Prostate gland (tissue), 2 donors: ENCODE measurements at regions of chr20 and their contacts with region 1.

Region 1: DNA sequence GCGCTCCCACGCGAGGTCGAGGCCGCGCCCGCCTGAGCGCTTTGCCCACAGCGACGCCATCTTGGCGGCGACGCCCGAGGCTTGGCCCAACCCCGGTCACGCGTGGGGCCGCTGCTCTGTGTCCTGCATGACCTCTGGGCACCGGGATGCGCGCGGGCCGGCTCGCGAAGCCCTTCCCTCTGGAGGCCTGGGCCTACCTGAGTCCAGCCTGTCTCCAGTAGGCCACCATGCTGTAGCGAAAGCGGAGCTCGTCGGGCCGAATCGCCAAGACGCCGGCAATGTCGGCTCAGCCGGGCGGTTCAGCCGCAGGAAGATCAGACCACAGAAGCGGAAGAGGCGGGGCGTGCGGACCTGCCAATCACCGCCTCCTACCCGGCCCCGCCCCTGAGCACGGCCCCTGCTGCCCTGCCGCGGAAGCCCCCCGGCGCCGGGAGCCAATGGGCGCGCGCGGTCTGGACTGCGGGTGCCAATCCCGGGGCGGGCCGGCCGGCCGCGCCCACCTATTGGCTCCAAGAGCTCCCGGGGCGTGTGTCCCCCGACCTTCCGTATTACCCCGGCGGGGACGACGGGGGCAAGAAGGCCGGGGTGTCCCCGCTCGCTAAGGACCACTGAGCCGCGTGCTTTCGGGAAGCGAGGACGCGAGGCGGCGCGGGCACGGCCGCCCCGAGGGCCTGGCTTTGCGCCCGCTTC is at the start of gene ATP5F1E:
- DNase-seq: peak; percentile 95
- H3K4me3 ChIP-seq: peak within 1 kb of the TSS; percentile 66 to 68
- H3K27ac ChIP-seq: peak within 1 kb of the TSS; percentile 84
- H3K4me1 ChIP-seq: peaks cover 7% of the 10 kb centered on the region
- H3K27me3 ChIP-seq: no peaks in the 10 kb centered on the region
- CTCF ChIP-seq: peak in 2 of 4 experiments; percentile 5 to 7
- POLR2A ChIP-seq: peak; percentile 71
- total RNA-seq, gene ATP5F1E: 23.5 to 24.4 TPM

Region 2: DNA sequence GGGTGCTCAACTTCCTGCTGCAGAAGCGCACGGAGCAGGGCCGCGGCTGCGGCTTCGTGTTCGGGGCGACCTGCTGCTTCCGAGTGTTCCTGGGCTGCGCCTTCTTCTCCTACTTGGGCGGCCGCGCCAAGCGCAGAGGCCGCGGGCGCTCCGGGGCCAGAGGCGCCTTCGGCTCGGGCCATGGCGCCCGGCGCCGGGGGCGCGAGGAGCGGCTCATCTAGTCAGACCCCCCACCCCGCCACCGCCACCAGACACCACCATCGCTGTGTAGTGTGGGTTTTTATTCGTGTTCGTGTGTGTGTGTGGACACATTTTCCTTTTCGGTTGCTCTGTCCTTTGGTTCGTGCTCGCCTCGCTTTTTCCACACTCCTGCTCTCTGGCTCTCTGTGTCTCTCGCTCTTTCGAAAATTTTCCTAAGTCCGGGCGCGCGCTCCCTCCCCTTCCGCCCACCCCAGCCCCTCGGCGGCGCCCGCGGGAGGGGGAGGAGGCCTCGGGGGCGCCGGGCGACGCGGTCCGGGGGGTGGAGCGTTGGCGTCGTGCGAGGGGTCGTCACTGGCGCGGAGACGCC is 141.6 kb before region 1 on chr20:
- intact Hi-C with region 1: loop called (anchors 5 kb)
- DNase-seq: peak; percentile 58
- H3K4me3 ChIP-seq: peak overlapping the region; percentile 69 to 81
- H3K27ac ChIP-seq: peak overlapping the region; percentile 98 to 100
- H3K4me1 ChIP-seq: peaks cover 10% of the 10 kb centered on the region
- H3K27me3 ChIP-seq: no peaks in the 10 kb centered on the region
- CTCF ChIP-seq: no peak
- POLR2A ChIP-seq: peak; percentile 45

Region 3: GRCh38 chr20:58907399-58908137 is 124.6 kb before region 1 on chr20:
- intact Hi-C with region 1: loop called (anchors 5 kb)
- DNase-seq: peak; percentile 78
- H3K4me3 ChIP-seq: no peak overlapping the region
- H3K27ac ChIP-seq: peak overlapping the region; percentile 34 to 48
- H3K4me1 ChIP-seq: peaks cover 4% of the 10 kb centered on the region
- H3K27me3 ChIP-seq: no peaks in the 10 kb centered on the region
- CTCF ChIP-seq: no peak
- POLR2A ChIP-seq: peak; percentile 17

Region 4: GRCh38 chr20:58980700-58981627 is 51.2 kb before region 1 on chr20 and contains the start of gene NELFCD:
- intact Hi-C with region 1: loop called (anchors 5 kb)
- DNase-seq: peak; percentile 71
- H3K4me3 ChIP-seq: peak within 1 kb of the TSS; percentile 73 to 90
- H3K27ac ChIP-seq: peak within 1 kb of the TSS; percentile 75 to 77
- H3K4me1 ChIP-seq: peaks cover 6% of the 10 kb centered on the region
- H3K27me3 ChIP-seq: no peaks in the 10 kb centered on the region
- CTCF ChIP-seq: no peak
- POLR2A ChIP-seq: peak; percentile 21
- total RNA-seq, gene NELFCD: 55.0 to 85.2 TPM

Region 5: DNA sequence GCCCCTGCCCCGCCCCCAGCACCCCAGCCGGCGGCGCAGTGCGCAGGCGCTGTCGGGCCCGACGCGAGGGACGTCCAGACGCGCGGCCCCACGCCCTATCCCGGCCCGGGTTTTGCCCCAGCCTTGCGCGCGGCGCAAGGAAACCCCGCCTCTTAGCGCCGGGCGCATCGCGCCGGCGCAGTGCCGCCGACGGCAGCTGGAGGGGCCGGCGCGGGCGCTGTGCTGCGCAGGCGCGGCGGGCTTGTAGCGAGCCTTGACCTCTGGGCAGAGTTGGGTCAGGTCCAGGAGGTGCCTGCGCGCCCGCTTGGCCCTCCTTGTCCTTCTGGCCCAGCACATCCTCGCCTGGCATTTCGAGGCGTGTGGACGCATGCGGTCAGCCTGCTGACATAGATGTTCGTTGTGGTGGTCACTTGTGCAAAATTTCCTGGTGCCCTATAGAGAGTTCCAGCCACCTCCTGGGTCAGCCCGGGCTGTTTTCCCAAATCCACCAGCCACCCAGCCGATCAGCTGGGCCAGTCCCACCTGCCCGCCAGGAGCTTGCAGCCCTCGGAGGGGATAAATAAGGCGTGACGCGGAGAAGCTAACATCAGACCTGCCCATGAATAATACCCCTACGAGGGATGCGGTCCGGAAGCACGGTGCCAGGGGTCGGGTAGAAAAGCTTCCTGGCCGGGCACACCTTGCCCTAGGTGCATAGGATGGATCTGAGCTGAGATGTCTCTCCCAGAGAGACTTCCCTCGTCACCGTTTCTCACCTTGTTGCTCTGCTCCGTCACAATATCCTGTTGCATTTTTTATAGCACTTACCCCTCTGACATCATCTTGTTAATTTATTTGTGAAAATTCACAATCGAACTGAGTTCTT is 10.9 kb after region 1 on chr20:
- intact Hi-C with region 1: no loop called
- DNase-seq: peak; percentile 86
- H3K4me3 ChIP-seq: peak overlapping the region; percentile 90 to 93
- H3K27ac ChIP-seq: peak overlapping the region; percentile 71 to 72
- H3K4me1 ChIP-seq: peaks cover 4% of the 10 kb centered on the region
- H3K27me3 ChIP-seq: no peaks in the 10 kb centered on the region
- CTCF ChIP-seq: peak in 2 of 4 experiments; percentile 47 to 60
- POLR2A ChIP-seq: no peak